Activated T-helper 2 cell treated with anti-CD3 and anti-CD28 coated beads, Interferon-gamma antibody, Interleukin-2, Interleukin-4, amounts not matched to agents 10 μg/mL and 5 μg/mL and 100 μg/mL, durations not matched to agents 14 hours and 24 hours and 36 hours (primary cell): ENCODE measurements at regions of chr7 and their contacts with region 1.

Region 1: DNA sequence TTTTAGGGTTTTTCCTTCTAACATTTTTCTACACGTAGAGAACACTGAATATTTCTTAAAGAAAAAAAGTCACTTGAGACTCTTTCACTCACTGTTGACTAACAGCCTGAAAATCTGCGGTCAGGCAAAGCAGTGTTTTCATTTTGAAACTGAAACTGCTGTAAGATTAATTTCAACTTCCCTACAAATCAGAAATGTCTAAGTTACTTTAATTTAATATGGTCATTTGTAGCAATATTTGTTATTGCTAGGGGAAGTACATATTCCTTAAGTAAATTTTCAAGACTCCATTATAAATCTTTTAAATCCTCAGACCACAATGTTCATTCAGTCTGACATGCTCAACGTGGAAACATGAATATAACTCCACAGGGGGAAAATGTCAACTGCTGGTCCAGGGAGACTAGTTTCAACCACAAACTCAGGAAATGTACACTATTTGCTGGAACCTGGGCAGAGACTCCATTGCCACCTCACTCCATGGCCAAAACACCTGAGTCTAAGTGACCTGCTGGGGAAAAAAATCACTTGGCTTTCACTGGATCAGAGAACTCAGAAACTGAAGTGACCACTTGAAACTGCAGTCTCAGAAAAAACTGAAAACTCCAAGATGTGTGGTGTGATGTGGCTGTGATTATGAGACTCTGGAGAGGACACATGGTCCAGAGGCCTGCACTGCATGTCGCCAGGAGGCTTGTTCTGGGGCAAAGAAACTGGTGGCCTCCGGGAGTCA is 161.2 kb downstream of the TAX1BP1 start:
- DNase-seq: peak; percentile 22
- H3K4me3 Mint-ChIP-seq: no peak overlapping the region
- H3K27ac Mint-ChIP-seq: no peak overlapping the region
- H3K4me1 Mint-ChIP-seq: peaks cover 24% of the 10 kb centered on the region
- H3K27me3 Mint-ChIP-seq: peaks cover 21% of the 10 kb centered on the region

Region 2: DNA sequence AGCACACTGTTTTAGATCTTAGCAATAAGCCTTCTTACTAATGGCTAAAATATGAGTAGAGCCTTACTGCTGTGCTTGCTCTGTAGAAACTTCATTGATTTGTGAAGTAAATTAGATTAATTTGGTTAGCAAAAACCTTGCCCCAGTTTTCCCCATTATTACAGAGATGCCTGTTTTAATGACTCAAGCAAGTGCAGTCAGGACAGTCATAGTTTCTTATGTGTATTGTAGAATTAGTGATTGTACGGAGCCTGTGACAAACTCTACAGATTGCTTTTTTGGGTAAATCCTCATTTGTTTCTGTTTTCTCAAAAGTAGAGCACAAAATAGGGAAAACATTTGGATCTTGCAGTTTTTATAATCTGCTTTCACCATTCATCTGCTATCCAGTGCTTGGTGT is 154.2 kb before region 1 on chr7:
- intact Hi-C with region 1: no loop called
- DNase-seq: no peak
- H3K4me3 Mint-ChIP-seq: no peak overlapping the region
- H3K27ac Mint-ChIP-seq: no peak overlapping the region
- H3K4me1 Mint-ChIP-seq: peaks cover 26% of the 10 kb centered on the region
- H3K27me3 Mint-ChIP-seq: no peaks in the 10 kb centered on the region

Region 3: DNA sequence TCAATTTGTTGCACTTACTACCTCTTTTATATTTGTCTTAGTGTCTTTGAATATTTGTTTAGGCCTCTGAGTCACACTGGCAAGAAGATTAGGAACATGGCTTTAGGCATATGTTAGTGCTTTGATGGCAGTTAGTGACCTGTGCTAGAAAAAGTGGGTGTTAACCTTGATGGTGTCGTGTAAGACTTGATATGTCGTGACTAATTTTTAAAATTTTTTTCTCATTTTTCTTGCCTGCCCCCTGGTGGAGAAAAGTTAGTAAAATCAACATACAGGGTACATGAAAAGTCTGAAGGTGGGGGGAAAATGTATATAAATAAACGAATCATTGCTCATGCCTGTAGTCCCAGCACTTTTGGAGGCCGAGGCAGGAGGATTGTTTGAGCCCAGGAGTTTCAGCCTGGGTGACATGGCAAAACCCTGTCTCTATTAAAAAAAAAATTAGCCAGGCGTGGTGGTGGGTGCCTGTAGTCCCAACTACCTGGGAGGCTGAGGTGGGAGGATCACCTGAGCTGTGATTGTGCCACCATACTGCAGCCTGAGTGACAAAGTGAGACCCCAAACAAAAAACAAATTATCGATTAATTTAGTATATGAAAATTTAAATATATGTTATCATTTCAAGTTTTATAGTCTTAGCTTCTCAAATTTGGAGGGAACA is 116.7 kb before region 1 on chr7:
- intact Hi-C with region 1: loop called (anchors 10 kb)
- DNase-seq: no peak
- H3K4me3 Mint-ChIP-seq: no peak overlapping the region
- H3K27ac Mint-ChIP-seq: no peak overlapping the region
- H3K4me1 Mint-ChIP-seq: peaks cover 18% of the 10 kb centered on the region
- H3K27me3 Mint-ChIP-seq: no peaks in the 10 kb centered on the region